SK-N-SH (cell line): ENCODE measurements at regions of chr18 and their contacts with region 1.

Region 1: DNA sequence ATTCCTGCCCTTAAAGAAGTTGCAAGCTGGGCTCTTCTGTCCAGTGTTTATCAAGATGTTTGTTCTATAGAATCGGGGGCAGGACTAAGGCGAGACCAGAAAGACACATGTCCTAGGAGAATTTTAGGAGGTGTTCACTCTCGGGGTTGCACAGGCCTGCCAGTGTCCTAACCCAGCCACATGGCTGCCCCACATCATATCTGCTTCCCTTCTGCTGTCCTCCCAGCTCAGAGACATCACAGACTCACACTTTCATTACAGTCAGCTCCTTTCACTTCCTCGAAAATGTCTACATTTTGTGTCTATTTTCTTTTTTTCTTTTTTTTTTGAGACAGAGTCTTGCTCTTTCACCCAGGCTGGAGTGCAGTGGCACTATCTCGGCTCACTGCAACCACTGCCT is 10.7 kb upstream of the MRO start:
- DNase-seq: no peak
- H3K4me3 ChIP-seq: no peak overlapping the region
- H3K27ac ChIP-seq: no peak overlapping the region
- H3K4me1 ChIP-seq: no peaks in the 10 kb centered on the region
- H3K27me3 ChIP-seq: no peaks in the 10 kb centered on the region
- CTCF ChIP-seq: no peak
- EP300 ChIP-seq: no peak
- RAD21 ChIP-seq: no peak

Region 2: DNA sequence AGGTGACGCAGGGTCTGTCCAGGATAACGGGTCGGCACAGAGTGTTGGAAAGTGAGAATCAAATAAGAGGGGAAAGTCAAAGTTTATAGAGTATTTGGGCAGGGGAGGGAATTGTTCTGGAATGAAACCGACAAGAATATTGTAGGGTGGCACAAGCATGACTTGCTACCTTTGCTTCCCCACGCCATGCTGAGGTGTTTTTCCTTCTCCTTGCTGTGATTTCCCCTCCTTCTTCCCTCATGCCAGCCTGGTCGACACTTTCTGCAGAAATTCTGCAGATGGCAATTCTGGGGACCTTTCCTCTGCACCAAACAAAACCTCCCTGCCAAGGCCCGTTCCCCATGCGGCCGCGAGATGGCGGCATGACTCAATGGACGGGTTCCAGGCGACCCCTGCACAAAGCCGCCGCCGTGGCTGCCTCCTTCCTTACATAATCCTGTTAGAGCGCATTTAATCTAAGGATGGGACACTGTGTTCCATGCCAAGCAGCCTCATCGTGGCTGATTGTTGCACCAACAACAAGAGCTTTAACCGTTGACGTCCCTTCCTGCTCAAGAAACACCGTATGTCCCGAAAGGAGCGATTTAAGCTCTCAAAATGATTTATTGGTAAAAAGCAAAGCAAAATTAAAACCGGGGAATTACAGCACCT is 10.7 kb before region 1 on chr18 and contains the start of gene MRO:
- CTCF ChIA-PET with region 1: interaction called, 17 read pairs
- POLR2A ChIA-PET with region 1: no interaction called
- DNase-seq: peak; percentile 87
- H3K4me3 ChIP-seq: peak within 1 kb of the TSS; percentile 32 to 54
- H3K27ac ChIP-seq: no peak within 1 kb of the TSS
- H3K4me1 ChIP-seq: peaks cover 0 to 5% of the 10 kb centered on the region in 2 experiments; a peak in 2 of 4 replicates
- H3K27me3 ChIP-seq: no peaks in the 10 kb centered on the region; the same call in 1 of the 2 replicates
- CTCF ChIP-seq: peak; percentile 96
- EP300 ChIP-seq: no peak
- RAD21 ChIP-seq: peak; percentile 97
- polyA plus RNA-seq, gene MRO: not detected in 2 replicates

Region 3: GRCh38 chr18:50928551-50928950 is 98.0 kb after region 1 on chr18:
- CTCF ChIA-PET with region 1: no interaction called
- POLR2A ChIA-PET with region 1: no interaction called
- DNase-seq: no peak
- H3K4me3 ChIP-seq: no peak overlapping the region
- H3K27ac ChIP-seq: no peak overlapping the region
- H3K4me1 ChIP-seq: no peaks in the 10 kb centered on the region
- H3K27me3 ChIP-seq: no peaks in the 10 kb centered on the region
- CTCF ChIP-seq: no peak
- EP300 ChIP-seq: no peak
- RAD21 ChIP-seq: no peak